Panc1 (cell line): ENCODE measurements at regions of chr2 and their contacts with region 1.

Region 1: DNA sequence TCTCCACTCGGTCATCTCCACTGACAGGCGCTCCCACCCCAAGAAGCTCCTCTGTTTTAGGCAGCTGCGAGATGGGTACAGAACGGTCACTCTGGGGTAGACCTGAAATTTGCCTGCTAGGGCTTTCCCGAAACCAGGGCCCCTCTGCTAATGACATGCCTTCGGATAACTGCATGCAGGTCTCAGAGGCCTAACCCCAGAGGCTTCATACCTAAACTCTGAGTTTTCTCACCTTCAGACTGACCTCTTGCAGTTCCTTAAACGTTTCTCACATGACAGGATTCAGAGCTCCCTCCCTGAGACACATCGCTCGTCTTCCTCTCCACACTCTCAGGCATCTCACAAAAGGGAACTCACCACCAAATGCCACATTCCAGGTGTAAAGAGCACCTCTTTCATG is 11.3 kb upstream of the KLHL29 start:
- DNase-seq: no peak
- ATAC-seq: no peak
- H3K4me3 ChIP-seq: no peak overlapping the region
- H3K27ac ChIP-seq: no peak overlapping the region
- H3K4me1 ChIP-seq: no peaks in the 10 kb centered on the region
- H3K27me3 ChIP-seq: no peaks in the 10 kb centered on the region
- CTCF ChIP-seq: no peak

Region 2: DNA sequence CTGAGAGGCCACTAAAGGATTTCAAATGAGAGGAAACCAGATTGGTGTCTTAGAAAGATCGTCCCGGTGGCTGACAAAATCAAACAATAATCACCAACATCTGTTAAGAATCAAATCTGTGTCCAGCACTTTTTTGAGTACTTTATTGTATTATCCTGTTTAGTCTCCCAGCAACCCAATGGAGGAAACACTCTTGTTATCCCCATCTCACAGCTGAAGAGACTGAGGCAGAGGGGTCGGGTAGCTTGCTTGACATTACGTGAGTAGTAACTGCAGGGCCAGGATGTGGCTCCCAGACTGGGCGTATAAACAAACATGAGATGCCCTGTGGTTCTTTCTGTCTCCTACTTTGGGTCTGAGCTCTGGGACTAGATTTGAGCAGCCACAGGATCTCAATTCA is 87.3 kb after region 1 on chr2:
- CTCF ChIA-PET with region 1: no interaction called
- POLR2A ChIA-PET with region 1: interaction called, 14 read pairs
- in situ Hi-C with region 1: no loop called
- intact Hi-C with region 1: no loop called
- DNase-seq: no peak
- ATAC-seq: no peak
- H3K4me3 ChIP-seq: no peak overlapping the region
- H3K27ac ChIP-seq: no peak overlapping the region
- H3K4me1 ChIP-seq: no peaks in the 10 kb centered on the region
- H3K27me3 ChIP-seq: no peaks in the 10 kb centered on the region
- CTCF ChIP-seq: no peak

Region 3: DNA sequence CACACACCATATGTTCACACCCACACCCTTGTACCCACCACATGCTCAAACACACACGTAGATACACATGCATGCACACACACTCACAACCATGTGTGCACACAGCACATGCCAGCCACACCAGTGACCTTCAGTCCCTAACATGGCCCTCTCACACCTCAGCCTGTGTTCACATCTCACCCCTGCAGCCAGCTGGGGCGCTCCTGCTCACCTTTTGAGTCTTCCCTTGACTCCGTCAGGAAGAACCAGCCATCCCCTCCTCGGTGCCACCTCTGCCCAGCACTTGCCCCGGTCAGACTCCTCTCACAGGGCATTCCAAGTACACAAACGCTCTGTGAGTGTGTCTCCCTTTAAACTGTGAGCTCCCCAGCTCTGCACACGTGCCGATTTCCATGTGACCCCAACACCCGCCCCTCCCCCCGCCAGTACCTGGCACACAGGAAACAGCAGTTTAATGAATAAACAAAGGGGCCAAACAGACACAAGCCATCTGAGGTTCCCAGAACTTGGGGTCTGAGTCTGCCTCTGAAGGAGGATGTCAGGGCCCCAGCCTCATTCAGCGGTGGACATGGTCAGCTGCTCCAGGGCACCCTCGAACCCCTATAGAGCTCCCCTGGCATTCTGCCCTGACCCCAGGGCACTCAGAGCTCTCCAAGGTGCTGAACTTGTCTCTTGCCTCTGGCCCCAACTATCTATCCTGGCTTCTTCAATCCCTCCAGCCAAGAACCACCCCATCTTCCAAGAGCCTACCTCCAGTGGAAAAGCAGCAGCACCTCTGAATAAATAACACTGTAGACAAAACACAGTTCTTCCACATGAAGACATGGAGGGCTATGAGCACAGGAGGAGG is 300.4 kb after region 1 on chr2:
- CTCF ChIA-PET with region 1: no interaction called
- POLR2A ChIA-PET with region 1: no interaction called
- in situ Hi-C with region 1: no loop called
- intact Hi-C with region 1: no loop called
- DNase-seq: no peak
- ATAC-seq: no peak
- H3K4me3 ChIP-seq: no peak overlapping the region
- H3K27ac ChIP-seq: no peak overlapping the region
- H3K4me1 ChIP-seq: no peaks in the 10 kb centered on the region
- H3K27me3 ChIP-seq: no peaks in the 10 kb centered on the region
- CTCF ChIP-seq: no peak